ENCODE measurements at regions of chrX and their contacts with region 1.

Region 1: DNA sequence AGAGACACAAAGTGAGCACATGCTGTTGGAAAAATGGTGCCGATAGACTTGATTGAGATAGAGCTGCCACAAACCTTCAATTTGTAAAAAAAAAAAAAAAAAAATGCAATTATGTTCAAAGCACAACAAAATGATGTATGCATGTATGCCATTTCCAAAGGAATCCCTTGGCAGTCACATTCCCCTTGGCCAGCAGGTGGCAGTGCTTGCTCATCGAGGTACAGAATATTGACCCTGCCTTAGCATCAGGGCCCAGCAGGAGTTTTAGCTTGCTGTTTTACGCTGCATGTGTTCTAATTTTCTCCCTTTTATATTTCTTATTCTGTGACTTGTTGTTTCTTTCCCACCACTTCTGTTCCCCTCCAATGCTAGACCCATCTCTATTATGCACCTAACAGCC is 34.5 kb upstream of the CYBB start:
- DNase-seq: peak; percentile 53
- ATAC-seq: peak; percentile 86
- H3K4me3 ChIP-seq: no peak overlapping the region
- H3K27ac ChIP-seq: peak overlapping the region; percentile 69
- H3K4me1 ChIP-seq: peaks cover 15% of the 10 kb centered on the region
- H3K27me3 ChIP-seq: no peaks in the 10 kb centered on the region; a peak in 1 of 4 replicates
- CTCF ChIP-seq: peak; percentile 84 to 91 (median 84)
- EP300 ChIP-seq: no peak
- POLR2A ChIP-seq: no peak
- RAD21 ChIP-seq: peak; percentile 97

Region 2: DNA sequence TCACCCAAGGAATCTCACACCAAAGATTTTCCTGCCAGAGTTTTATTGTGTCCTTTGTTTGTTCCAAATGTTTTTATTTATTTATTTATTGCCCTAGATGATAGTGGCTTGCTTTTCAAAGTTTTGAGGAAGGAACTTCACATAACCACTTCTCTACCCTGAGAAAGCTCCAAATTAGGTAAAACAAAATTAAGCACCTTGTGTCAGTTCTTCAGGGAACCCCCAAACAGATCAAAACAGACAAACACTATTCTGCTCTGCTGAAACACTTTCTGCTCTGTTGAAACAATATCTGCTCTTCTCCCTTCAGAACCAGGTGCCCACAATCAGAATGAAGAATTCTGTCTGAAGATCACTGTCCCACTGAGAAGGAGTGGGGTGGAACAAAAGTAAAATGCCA is 18.0 kb after region 1 on chrX:
- CTCF ChIA-PET with region 1: interaction called, 43 read pairs
- POLR2A ChIA-PET with region 1: interaction called, 4 read pairs
- RAD21 ChIA-PET with region 1: interaction called, 13 read pairs
- SMC1A ChIA-PET with region 1: interaction called, 21 read pairs
- in situ Hi-C with region 1: no loop called
- intact Hi-C with region 1: no loop called
- DNase-seq: no peak
- ATAC-seq: peak; percentile 69
- H3K4me3 ChIP-seq: no peak overlapping the region
- H3K27ac ChIP-seq: peak overlapping the region; percentile 33; the same call in 1 of the 2 replicates
- H3K4me1 ChIP-seq: peaks cover 5% of the 10 kb centered on the region; the same call in 1 of the 2 replicates
- H3K27me3 ChIP-seq: no peaks in the 10 kb centered on the region
- CTCF ChIP-seq: no peak
- EP300 ChIP-seq: no peak
- POLR2A ChIP-seq: no peak
- RAD21 ChIP-seq: no peak

Region 3: DNA sequence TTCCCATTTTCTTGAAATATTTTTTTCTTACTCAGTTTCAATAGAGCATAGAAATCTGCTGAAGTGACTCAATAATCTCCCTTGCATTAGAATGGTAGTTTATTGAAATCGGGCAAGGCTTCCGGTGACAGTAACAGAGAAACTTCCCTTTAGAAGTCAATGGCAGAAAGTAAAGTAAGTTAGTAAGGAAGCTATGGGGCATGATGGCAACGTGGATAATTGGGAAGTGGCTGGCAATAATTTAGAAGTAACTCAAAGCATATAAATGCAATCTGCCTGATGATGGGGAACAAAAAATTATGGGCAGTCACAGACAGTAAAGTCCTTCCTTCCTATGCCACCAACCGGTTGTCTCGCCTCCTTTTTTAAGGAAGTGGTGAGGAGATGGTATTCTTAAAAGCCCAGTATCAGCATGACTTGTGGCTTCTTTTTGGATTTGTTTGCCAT is 42.1 kb after region 1 on chrX:
- CTCF ChIA-PET with region 1: interaction called, 68 read pairs
- POLR2A ChIA-PET with region 1: interaction called, 19 read pairs
- RAD21 ChIA-PET with region 1: interaction called, 183 read pairs
- SMC1A ChIA-PET with region 1: interaction called, 157 read pairs
- in situ Hi-C with region 1: no loop called
- intact Hi-C with region 1: loop called (anchors 2 kb)
- DNase-seq: no peak
- ATAC-seq: peak; percentile 62
- H3K4me3 ChIP-seq: peak overlapping the region; percentile 33
- H3K27ac ChIP-seq: peak overlapping the region; percentile 85
- H3K4me1 ChIP-seq: no peaks in the 10 kb centered on the region; the same call in 1 of the 2 replicates
- H3K27me3 ChIP-seq: no peaks in the 10 kb centered on the region
- CTCF ChIP-seq: no peak
- EP300 ChIP-seq: peak in 1 of 2 experiments; percentile 64; a peak in 1 of 4 replicates
- POLR2A ChIP-seq: no peak
- RAD21 ChIP-seq: no peak

Region 4: GRCh38 chrX:37818031-37818430 is 72.7 kb after region 1 on chrX:
- CTCF ChIA-PET with region 1: interaction called, 376 read pairs
- POLR2A ChIA-PET with region 1: interaction called, 8 read pairs
- RAD21 ChIA-PET with region 1: interaction called, 186 read pairs
- SMC1A ChIA-PET with region 1: interaction called, 264 read pairs
- in situ Hi-C with region 1: loop called (anchors 5 kb)
- intact Hi-C with region 1: no loop called
- DNase-seq: no peak
- ATAC-seq: peak; percentile 45
- H3K4me3 ChIP-seq: no peak overlapping the region
- H3K27ac ChIP-seq: peak overlapping the region; percentile 37; the same call in 1 of the 2 replicates
- H3K4me1 ChIP-seq: peaks cover 20% of the 10 kb centered on the region
- H3K27me3 ChIP-seq: no peaks in the 10 kb centered on the region; a peak in 1 of 4 replicates
- CTCF ChIP-seq: no peak
- EP300 ChIP-seq: no peak
- POLR2A ChIP-seq: no peak
- RAD21 ChIP-seq: no peak

Region 5: DNA sequence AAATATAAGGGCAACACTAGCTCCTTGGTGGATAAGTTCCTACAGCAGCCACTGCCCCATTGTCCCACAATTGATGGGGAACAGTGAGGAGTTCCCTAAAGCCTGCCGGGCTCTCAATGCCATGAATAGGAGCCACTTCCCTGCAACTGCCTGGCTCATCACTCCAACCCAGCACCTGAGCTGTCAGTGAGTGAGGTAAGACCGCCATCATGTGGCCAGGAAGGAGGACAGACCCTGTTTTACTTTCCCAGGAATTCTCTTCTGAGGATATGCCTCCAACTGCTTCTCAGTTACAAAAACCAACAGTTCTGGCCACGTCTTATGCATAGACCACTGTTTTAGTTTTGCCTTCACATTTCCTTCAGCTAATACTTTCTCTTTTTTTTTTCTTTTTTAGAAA is 429.8 kb after region 1 on chrX:
- CTCF ChIA-PET with region 1: interaction called, 11 read pairs
- POLR2A ChIA-PET with region 1: no interaction called
- RAD21 ChIA-PET with region 1: no interaction called
- SMC1A ChIA-PET with region 1: interaction called, 3 read pairs
- in situ Hi-C with region 1: loop called (anchors 10 kb)
- intact Hi-C with region 1: loop called (anchors 1 kb)
- DNase-seq: peak; percentile 3
- ATAC-seq: peak; percentile 81
- H3K4me3 ChIP-seq: no peak overlapping the region
- H3K27ac ChIP-seq: no peak overlapping the region
- H3K4me1 ChIP-seq: no peaks in the 10 kb centered on the region
- H3K27me3 ChIP-seq: no peaks in the 10 kb centered on the region; a peak in 1 of 4 replicates
- CTCF ChIP-seq: peak; percentile 47 to 61 (median 55)
- EP300 ChIP-seq: no peak
- POLR2A ChIP-seq: no peak
- RAD21 ChIP-seq: peak; percentile 69